HCT116 (cell line): ENCODE measurements at regions of chr13 and their contacts with region 1.

Region 1: DNA sequence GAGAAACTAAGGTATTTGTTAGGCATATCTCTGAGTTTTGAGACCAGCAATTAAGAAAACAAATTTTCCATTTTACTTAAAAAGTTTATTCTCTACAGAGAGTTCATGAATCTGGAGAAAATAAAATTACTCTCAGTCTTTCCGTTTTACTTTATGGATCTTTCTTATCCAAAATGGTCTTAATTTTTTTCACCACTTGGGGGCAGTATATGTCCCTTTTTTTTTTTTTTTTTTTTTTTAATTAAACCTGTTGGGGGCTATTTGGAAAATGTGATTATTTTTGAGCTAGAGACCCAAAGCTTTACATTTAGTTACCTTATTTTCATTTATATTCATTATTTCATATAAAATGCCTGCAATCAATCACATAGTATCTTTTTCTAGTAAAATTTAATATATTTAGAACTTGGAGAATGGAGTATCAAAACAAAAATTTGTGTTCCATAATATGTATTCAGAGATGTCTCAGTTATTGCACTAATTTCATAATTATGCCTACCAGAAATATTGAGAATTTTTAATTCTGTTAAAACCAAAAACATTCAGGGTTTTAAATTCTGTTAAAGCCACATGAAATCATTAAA is 27.1 kb downstream of the PIBF1 start:
- DNase-seq: no peak
- ATAC-seq: no peak
- H3K4me3 ChIP-seq: no peak overlapping the region
- H3K27ac ChIP-seq: no peak overlapping the region
- H3K4me1 ChIP-seq: no peaks in the 10 kb centered on the region
- H3K27me3 ChIP-seq: no peaks in the 10 kb centered on the region
- CTCF ChIP-seq: peak; percentile 12 to 67 (median 33); a peak in 3 of 6 replicates
- POLR2A ChIP-seq: no peak
- RAD21 ChIP-seq: peak; percentile 32

Region 2: GRCh38 chr13:71605744-71606143 is 1203.3 kb before region 1 on chr13:
- CTCF ChIA-PET with region 1: no interaction called
- POLR2A ChIA-PET with region 1: no interaction called
- RAD21 ChIA-PET with region 1: no interaction called
- intact Hi-C with region 1: no loop called
- DNase-seq: no peak
- ATAC-seq: no peak
- H3K4me3 ChIP-seq: no peak overlapping the region
- H3K27ac ChIP-seq: no peak overlapping the region
- H3K4me1 ChIP-seq: no peaks in the 10 kb centered on the region
- H3K27me3 ChIP-seq: no peaks in the 10 kb centered on the region
- CTCF ChIP-seq: no peak
- POLR2A ChIP-seq: no peak
- RAD21 ChIP-seq: no peak

Region 3: GRCh38 chr13:72384879-72385278 is 424.1 kb before region 1 on chr13:
- CTCF ChIA-PET with region 1: no interaction called
- POLR2A ChIA-PET with region 1: no interaction called
- RAD21 ChIA-PET with region 1: no interaction called
- intact Hi-C with region 1: no loop called
- DNase-seq: no peak
- ATAC-seq: no peak
- H3K4me3 ChIP-seq: no peak overlapping the region
- H3K27ac ChIP-seq: no peak overlapping the region
- H3K4me1 ChIP-seq: peaks cover 0 to 6% of the 10 kb centered on the region in 2 experiments; a peak in 1 of 4 replicates
- H3K27me3 ChIP-seq: no peaks in the 10 kb centered on the region
- CTCF ChIP-seq: no peak
- POLR2A ChIP-seq: no peak
- RAD21 ChIP-seq: no peak

Region 4: DNA sequence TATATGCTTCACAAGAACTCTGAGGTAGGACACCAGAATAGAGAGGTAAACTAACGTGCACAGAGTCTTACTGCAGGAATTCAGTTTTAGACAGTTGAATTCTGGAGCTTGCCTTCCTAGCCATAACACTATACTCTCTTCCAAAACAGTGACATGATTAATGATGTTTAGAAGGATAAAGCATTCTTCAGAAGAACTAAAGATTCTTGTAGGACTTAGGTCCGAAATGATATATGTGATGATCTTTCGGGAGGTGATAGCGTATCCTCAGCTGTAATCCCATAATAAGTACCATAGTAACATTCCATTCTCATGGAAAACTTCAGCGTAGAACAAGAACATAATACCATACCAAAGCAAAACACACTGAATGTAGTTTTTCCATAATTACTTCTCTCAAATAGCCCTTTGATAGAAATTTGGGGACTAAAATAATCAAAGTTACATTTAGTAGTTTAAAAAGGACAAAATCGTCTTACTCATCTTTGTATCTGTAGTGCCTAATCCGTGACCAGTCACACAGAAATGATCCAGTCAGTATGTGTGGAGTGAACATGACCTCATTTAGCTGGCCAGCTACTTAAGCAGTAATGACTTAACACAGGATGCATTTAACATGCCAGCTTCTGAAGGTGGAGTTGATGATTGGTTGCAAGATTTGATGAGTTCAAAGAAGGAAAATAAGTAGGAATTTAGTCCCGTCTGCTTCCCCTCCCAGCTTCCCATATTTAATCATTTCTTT is 11.3 kb after region 1 on chr13:
- CTCF ChIA-PET with region 1: interaction called, 10 read pairs
- POLR2A ChIA-PET with region 1: interaction called, 3 read pairs
- RAD21 ChIA-PET with region 1: no interaction called
- intact Hi-C with region 1: no loop called
- DNase-seq: no peak
- ATAC-seq: no peak
- H3K4me3 ChIP-seq: no peak overlapping the region
- H3K27ac ChIP-seq: no peak overlapping the region
- H3K4me1 ChIP-seq: no peaks in the 10 kb centered on the region
- H3K27me3 ChIP-seq: no peaks in the 10 kb centered on the region
- CTCF ChIP-seq: no peak
- POLR2A ChIP-seq: no peak
- RAD21 ChIP-seq: no peak

Region 5: DNA sequence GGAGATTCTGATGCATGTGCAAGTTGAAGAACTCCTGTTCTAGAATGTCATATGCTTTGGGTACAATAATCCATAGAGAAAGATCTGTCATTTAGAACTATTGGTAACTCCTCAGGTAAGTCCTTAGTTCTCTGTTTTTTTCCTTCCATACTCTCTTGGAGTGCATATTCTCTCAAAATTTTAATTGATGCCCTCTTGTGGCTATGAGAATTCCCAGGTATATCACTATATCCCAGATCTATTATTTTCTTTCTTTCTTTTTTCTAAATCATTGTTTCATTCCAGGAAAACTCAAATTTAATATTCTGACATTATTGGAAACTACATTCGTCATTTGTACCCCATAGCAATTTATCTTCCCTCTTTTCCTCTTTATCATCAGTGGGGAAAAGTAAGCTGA is 735.2 kb after region 1 on chr13:
- CTCF ChIA-PET with region 1: interaction called, 3 read pairs
- POLR2A ChIA-PET with region 1: no interaction called
- RAD21 ChIA-PET with region 1: no interaction called
- intact Hi-C with region 1: loop called (anchors 10 kb)
- DNase-seq: no peak
- ATAC-seq: no peak; the same call in 1 of the 2 replicates
- H3K4me3 ChIP-seq: no peak overlapping the region
- H3K27ac ChIP-seq: no peak overlapping the region
- H3K4me1 ChIP-seq: peaks cover 0 to 6% of the 10 kb centered on the region in 2 experiments; a peak in 1 of 4 replicates
- H3K27me3 ChIP-seq: no peaks in the 10 kb centered on the region
- CTCF ChIP-seq: peak in 1 of 3 experiments; percentile 41; a peak in 2 of 6 replicates
- POLR2A ChIP-seq: no peak
- RAD21 ChIP-seq: peak; percentile 42; the same call in 1 of the 2 replicates